MCF 10A (cell line): ENCODE measurements at regions of chr17 and their contacts with region 1.

Region 1: GRCh38 chr17:38485146-38485468 is 56.8 kb downstream of the ARHGAP23 start:
- DNase-seq: no peak
- H3K4me3 Mint-ChIP-seq: no peak overlapping the region
- H3K27ac Mint-ChIP-seq: no peak overlapping the region
- H3K4me1 Mint-ChIP-seq: peaks cover 13% of the 10 kb centered on the region
- H3K27me3 Mint-ChIP-seq: no peaks in the 10 kb centered on the region
- CTCF ChIP-seq: no peak

Region 2: GRCh38 chr17:38428112-38428642 is 56.9 kb before region 1 on chr17 and contains the start of gene ARHGAP23:
- CTCF ChIA-PET with region 1: interaction called, 5 read pairs
- POLR2A ChIA-PET with region 1: no interaction called
- intact Hi-C with region 1: loop called (anchors 1 kb)
- DNase-seq: peak; percentile 21
- H3K4me3 Mint-ChIP-seq: peak within 1 kb of the TSS; percentile 59
- H3K27ac Mint-ChIP-seq: no peak within 1 kb of the TSS
- H3K4me1 Mint-ChIP-seq: peaks cover 15% of the 10 kb centered on the region
- H3K27me3 Mint-ChIP-seq: no peaks in the 10 kb centered on the region
- CTCF ChIP-seq: no peak
- total RNA-seq, gene ARHGAP23: 23.2 and 29.2 TPM in 2 replicates

Region 3: GRCh38 chr17:38444151-38444550 is 41.0 kb before region 1 on chr17:
- CTCF ChIA-PET with region 1: interaction called, 27 read pairs
- POLR2A ChIA-PET with region 1: no interaction called
- intact Hi-C with region 1: loop called (anchors 1 kb)
- DNase-seq: peak; percentile 80
- H3K4me3 Mint-ChIP-seq: no peak overlapping the region
- H3K27ac Mint-ChIP-seq: no peak overlapping the region
- H3K4me1 Mint-ChIP-seq: peaks cover 8% of the 10 kb centered on the region
- H3K27me3 Mint-ChIP-seq: no peaks in the 10 kb centered on the region
- CTCF ChIP-seq: peak; percentile 95

Region 4: GRCh38 chr17:38464723-38465390 is 20.2 kb before region 1 on chr17:
- CTCF ChIA-PET with region 1: no interaction called
- POLR2A ChIA-PET with region 1: no interaction called
- intact Hi-C with region 1: no loop called
- DNase-seq: peak; percentile 77
- H3K4me3 Mint-ChIP-seq: peak overlapping the region; percentile 79
- H3K27ac Mint-ChIP-seq: peak overlapping the region; percentile 98
- H3K4me1 Mint-ChIP-seq: peaks cover 33% of the 10 kb centered on the region
- H3K27me3 Mint-ChIP-seq: no peaks in the 10 kb centered on the region
- CTCF ChIP-seq: no peak

Region 5: DNA sequence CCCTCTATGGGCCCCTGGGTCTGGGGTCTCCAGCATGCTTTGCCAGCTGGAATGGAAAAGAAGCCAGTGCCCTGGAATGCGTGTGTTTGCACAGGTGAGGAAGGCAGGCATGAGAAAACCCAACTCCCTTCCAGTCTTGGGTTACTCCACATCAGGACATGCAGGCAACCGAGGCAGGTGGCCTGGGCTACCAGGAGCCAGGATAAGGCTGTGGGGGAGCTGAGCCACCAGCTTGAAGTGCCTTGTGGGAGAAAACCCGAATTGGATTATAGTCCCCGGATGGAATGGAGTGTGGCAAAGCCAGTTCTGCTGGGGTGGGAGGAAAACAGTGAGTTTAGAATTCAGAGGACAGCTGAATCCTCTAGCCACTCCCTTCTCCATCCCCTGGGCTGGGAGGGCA is 113.4 kb after region 1 on chr17:
- CTCF ChIA-PET with region 1: no interaction called
- POLR2A ChIA-PET with region 1: no interaction called
- intact Hi-C with region 1: no loop called
- DNase-seq: peak; percentile 86
- H3K4me3 Mint-ChIP-seq: no peak overlapping the region
- H3K27ac Mint-ChIP-seq: no peak overlapping the region
- H3K4me1 Mint-ChIP-seq: no peaks in the 10 kb centered on the region
- H3K27me3 Mint-ChIP-seq: peaks cover 22% of the 10 kb centered on the region
- CTCF ChIP-seq: no peak